CD4-positive, alpha-beta T cell (primary cell): ENCODE measurements at regions of chr6 and their contacts with region 1.

Region 1: GRCh38 chr6:34526992-34527728 is 29.0 kb downstream of the SPDEF start:
- DNase-seq: peak; percentile 94 to 99 (median 97)
- ATAC-seq: peak; percentile 98
- H3K4me3 ChIP-seq: peak overlapping the region; percentile 26
- H3K4me3 Mint-ChIP-seq: peak overlapping the region; percentile 54
- H3K27ac ChIP-seq: no peak overlapping the region
- H3K27ac Mint-ChIP-seq: peak overlapping the region; percentile 75
- H3K4me1 ChIP-seq: peaks cover 15% of the 10 kb centered on the region
- H3K4me1 Mint-ChIP-seq: peaks cover 11% of the 10 kb centered on the region
- H3K27me3 ChIP-seq: no peaks in the 10 kb centered on the region
- H3K27me3 Mint-ChIP-seq: no peaks in the 10 kb centered on the region
- CTCF ChIP-seq: peak; percentile 78

Region 2: DNA sequence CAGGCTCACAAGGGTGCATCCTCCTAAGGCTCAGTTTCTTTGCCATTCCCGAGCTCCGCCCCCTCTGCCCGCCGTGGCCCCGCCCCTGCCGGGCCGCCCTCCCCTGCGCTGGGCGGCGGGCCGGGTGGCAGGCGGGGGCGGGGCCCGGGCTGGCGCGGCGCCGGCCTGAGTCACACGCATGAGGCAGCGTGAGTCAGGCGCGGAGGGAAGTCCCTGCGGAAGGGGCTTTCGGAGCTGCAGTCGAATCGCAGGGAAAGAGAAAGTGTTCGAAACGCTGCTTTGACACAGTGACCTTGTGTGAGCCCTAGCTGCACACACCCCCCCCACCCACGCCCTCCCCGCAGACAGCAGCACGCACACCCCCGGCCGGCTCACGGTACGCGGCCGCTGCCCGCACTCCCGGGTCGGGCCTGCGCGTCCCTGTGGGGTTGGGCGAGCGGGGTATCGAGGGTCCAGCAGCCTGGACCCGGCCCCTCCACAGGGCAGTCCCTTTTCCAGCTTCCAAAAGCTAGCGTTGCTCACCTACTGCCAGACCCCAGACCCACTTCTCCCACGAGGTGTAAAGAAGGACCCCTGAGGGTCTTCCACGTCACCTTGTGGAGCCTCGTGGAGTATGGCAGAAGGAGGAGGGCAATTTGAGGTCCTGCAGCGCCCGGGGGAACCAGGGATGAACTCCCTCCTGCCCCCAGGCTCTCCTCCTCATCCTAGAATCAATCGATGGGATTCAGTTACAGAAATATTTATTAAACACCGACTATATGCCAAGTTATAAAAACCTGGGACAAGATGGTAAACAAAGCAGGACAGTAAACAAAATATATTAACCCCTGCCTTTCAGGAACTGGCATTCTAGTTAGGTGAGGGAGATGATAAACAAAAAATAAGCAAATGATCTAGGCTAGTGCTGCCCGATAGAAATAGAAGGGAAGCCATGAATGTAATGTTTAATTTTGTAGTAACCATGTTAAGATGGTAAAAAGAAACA is 302.9 kb before region 1 on chr6:
- CTCF ChIA-PET with region 1: no interaction called
- POLR2A ChIA-PET with region 1: no interaction called
- intact Hi-C with region 1: loop called in 1 of 2 experiments (anchors 5 kb)
- DNase-seq: peak; percentile 87 to 99 (median 93)
- ATAC-seq: peak; percentile 95
- H3K4me3 ChIP-seq: peak overlapping the region; percentile 62
- H3K4me3 Mint-ChIP-seq: peak overlapping the region; percentile 63
- H3K27ac ChIP-seq: peak overlapping the region; percentile 89 to 99
- H3K27ac Mint-ChIP-seq: peak overlapping the region; percentile 75
- H3K4me1 ChIP-seq: peaks cover 20% of the 10 kb centered on the region
- H3K4me1 Mint-ChIP-seq: peaks cover 6% of the 10 kb centered on the region
- H3K27me3 ChIP-seq: no peaks in the 10 kb centered on the region
- H3K27me3 Mint-ChIP-seq: no peaks in the 10 kb centered on the region
- CTCF ChIP-seq: no peak

Region 3: GRCh38 chr6:34425498-34426410 is 101.4 kb before region 1 on chr6 and contains the start of gene RPS10:
- CTCF ChIA-PET with region 1: no interaction called
- POLR2A ChIA-PET with region 1: interaction called, 5 read pairs
- intact Hi-C with region 1: loop called in 1 of 2 experiments (anchors 5 kb)
- DNase-seq: peak; percentile 81 to 96 (median 88)
- ATAC-seq: peak; percentile 97
- H3K4me3 ChIP-seq: peak within 1 kb of the TSS; percentile 75
- H3K4me3 Mint-ChIP-seq: peak within 1 kb of the TSS; percentile 99
- H3K27ac ChIP-seq: peak within 1 kb of the TSS; percentile 73 to 74
- H3K27ac Mint-ChIP-seq: peak within 1 kb of the TSS; percentile 97
- H3K4me1 ChIP-seq: peaks cover 37% of the 10 kb centered on the region
- H3K4me1 Mint-ChIP-seq: peaks cover 39% of the 10 kb centered on the region
- H3K27me3 ChIP-seq: no peaks in the 10 kb centered on the region
- H3K27me3 Mint-ChIP-seq: no peaks in the 10 kb centered on the region
- CTCF ChIP-seq: no peak
- total RNA-seq, gene RPS10: 3,088 to 3,122 TPM

Region 4: DNA sequence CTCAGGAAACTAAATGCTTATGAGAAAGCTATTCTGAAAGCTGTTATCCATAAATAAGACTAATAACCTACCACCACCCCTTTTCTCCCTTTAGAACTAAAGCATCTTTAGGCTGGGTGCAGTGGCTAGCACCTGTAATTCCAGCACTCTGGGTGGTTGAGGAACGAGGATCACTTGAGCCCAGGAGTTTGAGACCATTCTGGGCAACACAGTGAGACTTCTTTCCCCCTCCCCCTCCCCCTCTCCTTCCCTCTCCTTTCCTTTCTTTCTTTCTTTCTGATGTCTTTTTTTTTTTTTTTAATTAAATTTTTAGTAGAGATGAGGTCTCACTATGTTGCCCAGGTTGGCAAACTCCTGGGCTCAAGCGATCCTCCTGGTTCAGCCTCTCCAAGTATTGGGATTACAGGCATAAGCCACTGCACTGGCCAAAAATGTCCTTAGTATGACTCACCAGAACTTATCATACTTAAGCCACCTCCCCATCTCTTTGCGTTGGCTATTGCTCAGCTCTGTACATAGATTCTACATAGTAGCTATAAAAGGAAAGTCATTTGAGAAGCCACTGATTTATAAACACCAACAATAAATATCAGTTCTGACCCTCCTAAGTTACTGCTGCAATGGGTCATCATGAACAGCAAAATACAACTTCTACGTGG is 83.8 kb after region 1 on chr6:
- CTCF ChIA-PET with region 1: interaction called, 6 read pairs
- POLR2A ChIA-PET with region 1: no interaction called
- intact Hi-C with region 1: loop called (anchors 1 kb)
- DNase-seq: no peak
- ATAC-seq: no peak
- H3K4me3 ChIP-seq: no peak overlapping the region
- H3K4me3 Mint-ChIP-seq: no peak overlapping the region
- H3K27ac ChIP-seq: no peak overlapping the region
- H3K27ac Mint-ChIP-seq: no peak overlapping the region
- H3K4me1 ChIP-seq: peaks cover 2% of the 10 kb centered on the region
- H3K4me1 Mint-ChIP-seq: peaks cover 23% of the 10 kb centered on the region
- H3K27me3 ChIP-seq: no peaks in the 10 kb centered on the region
- H3K27me3 Mint-ChIP-seq: no peaks in the 10 kb centered on the region
- CTCF ChIP-seq: no peak

Region 5: DNA sequence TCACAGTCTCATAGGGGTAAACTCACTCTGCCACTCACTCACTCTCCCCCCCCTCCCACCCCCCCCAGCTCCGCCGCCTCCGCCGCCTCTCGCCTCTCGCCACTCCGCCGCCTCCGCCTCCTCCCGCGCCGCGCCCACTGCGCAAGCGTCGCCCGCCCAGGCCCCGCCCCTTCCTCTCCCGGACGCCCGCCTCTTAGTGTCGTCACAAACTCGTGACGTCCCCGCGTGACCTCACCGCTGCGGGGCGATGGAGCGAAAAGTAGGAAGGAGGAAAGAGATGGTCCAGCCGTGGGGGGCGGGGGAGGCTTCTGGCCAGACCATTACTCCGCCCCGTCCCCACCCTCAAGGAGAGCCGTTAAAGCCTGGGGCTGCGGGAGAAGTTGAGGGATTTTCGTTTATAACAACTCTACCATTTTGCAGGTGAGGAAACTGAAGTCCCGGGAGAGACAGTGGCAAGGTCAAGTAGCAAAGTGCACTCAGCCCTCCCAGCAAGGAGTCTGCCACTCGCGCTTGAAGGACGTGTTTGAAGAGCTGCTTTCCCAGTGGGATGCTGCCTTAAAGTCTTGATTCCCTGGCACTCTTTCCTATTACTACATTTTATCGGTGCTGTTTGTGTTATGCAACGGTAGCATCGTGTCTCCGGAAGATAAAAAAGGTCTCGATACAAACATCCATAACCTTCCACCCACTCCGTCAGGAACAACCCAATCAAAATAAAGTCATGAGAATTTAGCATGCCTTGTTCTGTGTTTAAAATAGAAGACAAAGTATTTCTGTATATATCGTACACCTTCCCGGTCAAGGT is 169.8 kb after region 1 on chr6 and contains the start of gene ILRUN:
- CTCF ChIA-PET with region 1: no interaction called
- POLR2A ChIA-PET with region 1: no interaction called
- intact Hi-C with region 1: loop called in 1 of 2 experiments (anchors 10 kb)
- DNase-seq: peak; percentile 94 to 98 (median 96)
- ATAC-seq: peak; percentile 85
- H3K4me3 ChIP-seq: peak within 1 kb of the TSS; percentile 99
- H3K4me3 Mint-ChIP-seq: peak within 1 kb of the TSS; percentile 98
- H3K27ac ChIP-seq: peak within 1 kb of the TSS; percentile 80 to 87
- H3K27ac Mint-ChIP-seq: peak within 1 kb of the TSS; percentile 98
- H3K4me1 ChIP-seq: peaks cover 33% of the 10 kb centered on the region
- H3K4me1 Mint-ChIP-seq: peaks cover 53% of the 10 kb centered on the region
- H3K27me3 ChIP-seq: no peaks in the 10 kb centered on the region
- H3K27me3 Mint-ChIP-seq: no peaks in the 10 kb centered on the region
- CTCF ChIP-seq: no peak
- total RNA-seq, gene ILRUN: 44.9 to 49.4 TPM

Region 6: GRCh38 chr6:34791701-34792235 is 264.6 kb after region 1 on chr6 and contains the start of gene BLTP3A:
- CTCF ChIA-PET with region 1: interaction called, 3 read pairs
- POLR2A ChIA-PET with region 1: interaction called, 3 read pairs
- intact Hi-C with region 1: loop called in 1 of 2 experiments (anchors 10 kb)
- DNase-seq: peak; percentile 51 to 91 (median 71)
- ATAC-seq: peak; percentile 91
- H3K4me3 ChIP-seq: peak within 1 kb of the TSS; percentile 77
- H3K4me3 Mint-ChIP-seq: peak within 1 kb of the TSS; percentile 99
- H3K27ac ChIP-seq: peak within 1 kb of the TSS; percentile 44 to 73
- H3K27ac Mint-ChIP-seq: peak within 1 kb of the TSS; percentile 97
- H3K4me1 ChIP-seq: peaks cover 22% of the 10 kb centered on the region
- H3K4me1 Mint-ChIP-seq: peaks cover 26% of the 10 kb centered on the region
- H3K27me3 ChIP-seq: no peaks in the 10 kb centered on the region
- H3K27me3 Mint-ChIP-seq: no peaks in the 10 kb centered on the region
- CTCF ChIP-seq: peak; percentile 29
- total RNA-seq, gene BLTP3A: 7.6 to 8.1 TPM

Region 7: DNA sequence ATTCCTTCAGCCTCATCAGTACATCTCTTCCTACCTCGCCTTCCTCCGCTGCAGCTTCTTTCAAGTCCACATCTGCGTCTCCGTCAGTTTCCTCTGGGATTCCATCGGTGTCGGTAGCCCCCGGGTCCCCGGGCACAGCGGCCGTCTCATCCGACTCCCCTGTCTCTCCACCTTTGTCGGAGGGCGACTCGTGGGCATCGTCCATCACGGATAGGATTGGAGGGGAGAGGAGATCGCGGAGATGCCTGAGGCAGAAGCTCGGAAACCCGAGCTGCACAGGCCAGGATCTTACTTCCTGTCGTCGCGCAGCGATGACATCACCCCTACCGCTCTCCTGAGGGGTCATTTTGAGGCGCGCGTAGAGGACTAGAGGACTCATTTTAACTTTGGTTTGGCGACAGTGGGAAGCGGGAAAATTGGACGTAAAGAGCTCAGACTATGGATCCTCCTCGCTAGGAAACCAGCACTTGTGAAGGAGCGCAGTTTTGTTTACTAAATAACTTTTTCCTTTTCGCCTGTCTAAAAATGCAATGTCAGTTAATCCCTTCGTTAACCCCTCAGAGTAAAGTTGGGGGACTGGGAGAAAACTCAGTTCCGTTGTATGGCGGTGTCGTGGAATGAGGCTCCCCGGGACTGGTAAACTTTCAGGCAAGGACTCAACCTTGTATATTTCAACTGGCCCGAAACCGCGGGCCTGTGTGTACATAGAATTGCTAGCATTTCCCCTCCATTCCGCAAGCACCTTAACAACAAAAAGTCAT is 360.8 kb after region 1 on chr6 and contains the start of gene TAF11:
- CTCF ChIA-PET with region 1: no interaction called
- POLR2A ChIA-PET with region 1: no interaction called
- intact Hi-C with region 1: loop called in 1 of 2 experiments (anchors 5 kb)
- DNase-seq: peak; percentile 78 to 96 (median 87)
- ATAC-seq: peak; percentile 69
- H3K4me3 ChIP-seq: peak within 1 kb of the TSS; percentile 98
- H3K4me3 Mint-ChIP-seq: peak within 1 kb of the TSS; percentile 97
- H3K27ac ChIP-seq: peak within 1 kb of the TSS; percentile 90 to 93
- H3K27ac Mint-ChIP-seq: peak within 1 kb of the TSS; percentile 97
- H3K4me1 ChIP-seq: peaks cover 36% of the 10 kb centered on the region
- H3K4me1 Mint-ChIP-seq: peaks cover 62% of the 10 kb centered on the region
- H3K27me3 ChIP-seq: no peaks in the 10 kb centered on the region
- H3K27me3 Mint-ChIP-seq: no peaks in the 10 kb centered on the region
- CTCF ChIP-seq: no peak
- total RNA-seq, gene TAF11: 31.5 to 38.1 TPM